ENCODE measurements at regions of chr14 and their contacts with region 1.

Region 1: DNA sequence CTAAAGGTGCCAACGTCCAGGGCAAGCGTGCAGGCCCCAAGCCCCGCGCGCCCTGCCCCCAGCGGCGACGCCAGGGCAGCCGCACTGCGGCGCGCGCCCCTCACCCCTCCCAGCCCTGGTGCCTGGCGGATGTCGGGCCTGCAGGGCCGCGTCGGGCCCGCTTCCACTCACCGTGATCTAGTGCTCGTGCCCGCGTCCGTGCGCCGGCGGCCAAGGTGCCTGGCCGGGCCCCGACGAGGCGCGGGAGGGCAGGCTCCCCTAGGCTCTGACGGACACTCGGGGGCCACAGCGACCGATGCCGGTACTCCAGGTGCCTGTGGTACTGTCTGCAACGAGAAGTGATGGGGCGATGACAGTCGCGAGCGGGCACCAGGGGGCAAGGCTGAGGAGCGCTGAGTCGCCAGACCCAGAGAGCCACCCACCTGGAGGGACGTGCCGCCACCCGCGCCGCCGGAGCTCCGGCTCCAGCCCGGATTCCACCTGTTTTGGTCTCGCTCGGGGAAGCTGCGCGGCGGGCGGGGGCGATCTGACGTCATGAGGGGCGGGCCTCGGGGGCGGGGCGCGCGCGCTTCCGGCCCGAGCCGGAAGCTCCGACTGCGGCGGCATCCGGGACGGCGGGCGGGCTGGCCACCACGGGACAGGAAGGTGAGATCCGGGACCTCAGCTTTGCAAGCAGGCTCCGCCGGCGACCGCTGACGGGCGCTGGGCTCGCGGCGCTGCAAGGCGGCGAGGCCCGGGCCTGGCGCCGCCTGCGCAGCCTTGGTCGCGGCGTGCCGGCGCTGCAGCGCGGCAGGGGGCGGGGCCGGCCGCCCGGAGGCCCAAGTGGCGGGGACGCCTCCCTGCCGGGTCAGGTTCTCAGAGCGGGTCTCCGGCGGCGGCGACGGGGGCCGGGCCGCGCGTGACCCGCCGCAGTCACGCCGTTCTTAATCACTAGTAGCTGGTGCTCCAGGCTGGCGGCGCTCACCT is at the starts of genes LYSET and MOAP1:
- DNase-seq: no peak
- ATAC-seq: peak; percentile 92
- H3K4me3 ChIP-seq: peak within 1 kb of the TSS; percentile 88
- H3K27ac ChIP-seq: peak within 1 kb of the TSS; percentile 92
- H3K4me1 ChIP-seq: peaks cover 9% of the 10 kb centered on the region
- H3K27me3 ChIP-seq: no peaks in the 10 kb centered on the region
- CTCF ChIP-seq: peak; percentile 14 to 25 (median 25); a peak in 4 of 6 replicates
- EP300 ChIP-seq: no peak
- POLR2A ChIP-seq: peak; percentile 88
- RAD21 ChIP-seq: 0 out of 2 replicates have a peak, but pooled peaks have one; percentile 24
- polyA plus RNA-seq, gene LYSET: 33.4 to 34.5 TPM
- polyA plus RNA-seq, gene MOAP1: 3.1 to 5.2 TPM

Region 2: GRCh38 chr14:92945959-92946846 is 238.5 kb before region 1 on chr14:
- CTCF ChIA-PET with region 1: no interaction called
- POLR2A ChIA-PET with region 1: no interaction called
- RAD21 ChIA-PET with region 1: no interaction called
- SMC1A ChIA-PET with region 1: no interaction called
- in situ Hi-C with region 1: no loop called
- intact Hi-C with region 1: no loop called
- DNase-seq: no peak
- ATAC-seq: no peak
- H3K4me3 ChIP-seq: no peak overlapping the region
- H3K27ac ChIP-seq: no peak overlapping the region
- H3K4me1 ChIP-seq: no peaks in the 10 kb centered on the region
- H3K27me3 ChIP-seq: no peaks in the 10 kb centered on the region
- CTCF ChIP-seq: no peak
- EP300 ChIP-seq: no peak
- POLR2A ChIP-seq: no peak
- RAD21 ChIP-seq: no peak

Region 3: DNA sequence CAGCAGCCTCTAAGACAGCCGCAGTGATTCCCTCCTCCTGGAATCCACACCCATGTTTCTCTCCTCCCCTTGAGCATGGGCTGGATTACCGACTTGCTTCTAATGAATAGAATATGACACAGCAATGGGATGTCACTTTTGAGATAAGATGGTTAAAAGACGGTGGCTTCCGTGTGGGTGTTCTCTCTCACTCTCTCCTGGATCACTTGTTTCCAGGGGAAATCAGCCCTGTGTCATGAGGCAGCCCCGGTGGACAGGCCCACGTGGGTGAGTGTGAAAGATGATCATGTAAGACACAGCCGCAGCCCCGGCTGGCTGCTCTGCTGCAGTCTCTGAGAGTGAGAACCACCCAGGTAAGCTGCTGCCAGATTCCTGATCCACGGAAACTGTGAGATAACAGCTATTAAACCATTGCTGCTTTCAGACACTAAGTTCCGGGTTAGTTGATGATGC is 10.7 kb before region 1 on chr14:
- CTCF ChIA-PET with region 1: interaction called, 47 read pairs
- POLR2A ChIA-PET with region 1: interaction called, 19 read pairs
- RAD21 ChIA-PET with region 1: interaction called, 6 read pairs
- SMC1A ChIA-PET with region 1: interaction called, 69 read pairs
- in situ Hi-C with region 1: no loop called
- intact Hi-C with region 1: no loop called
- DNase-seq: no peak
- ATAC-seq: peak; percentile 42
- H3K4me3 ChIP-seq: no peak overlapping the region
- H3K27ac ChIP-seq: no peak overlapping the region
- H3K4me1 ChIP-seq: no peaks in the 10 kb centered on the region
- H3K27me3 ChIP-seq: no peaks in the 10 kb centered on the region
- CTCF ChIP-seq: no peak
- EP300 ChIP-seq: no peak
- POLR2A ChIP-seq: no peak
- RAD21 ChIP-seq: no peak

Region 4: GRCh38 chr14:93195316-93195999 is 10.8 kb after region 1 on chr14:
- CTCF ChIA-PET with region 1: interaction called, 17 read pairs
- POLR2A ChIA-PET with region 1: interaction called, 6 read pairs
- RAD21 ChIA-PET with region 1: no interaction called
- SMC1A ChIA-PET with region 1: interaction called, 5 read pairs
- in situ Hi-C with region 1: no loop called
- intact Hi-C with region 1: no loop called
- DNase-seq: no peak
- ATAC-seq: no peak
- H3K4me3 ChIP-seq: no peak overlapping the region
- H3K27ac ChIP-seq: no peak overlapping the region
- H3K4me1 ChIP-seq: no peaks in the 10 kb centered on the region
- H3K27me3 ChIP-seq: no peaks in the 10 kb centered on the region
- CTCF ChIP-seq: no peak
- EP300 ChIP-seq: no peak
- POLR2A ChIP-seq: no peak
- RAD21 ChIP-seq: no peak